ENCODE measurements at regions of chr22 and their contacts with region 1.

Region 1: DNA sequence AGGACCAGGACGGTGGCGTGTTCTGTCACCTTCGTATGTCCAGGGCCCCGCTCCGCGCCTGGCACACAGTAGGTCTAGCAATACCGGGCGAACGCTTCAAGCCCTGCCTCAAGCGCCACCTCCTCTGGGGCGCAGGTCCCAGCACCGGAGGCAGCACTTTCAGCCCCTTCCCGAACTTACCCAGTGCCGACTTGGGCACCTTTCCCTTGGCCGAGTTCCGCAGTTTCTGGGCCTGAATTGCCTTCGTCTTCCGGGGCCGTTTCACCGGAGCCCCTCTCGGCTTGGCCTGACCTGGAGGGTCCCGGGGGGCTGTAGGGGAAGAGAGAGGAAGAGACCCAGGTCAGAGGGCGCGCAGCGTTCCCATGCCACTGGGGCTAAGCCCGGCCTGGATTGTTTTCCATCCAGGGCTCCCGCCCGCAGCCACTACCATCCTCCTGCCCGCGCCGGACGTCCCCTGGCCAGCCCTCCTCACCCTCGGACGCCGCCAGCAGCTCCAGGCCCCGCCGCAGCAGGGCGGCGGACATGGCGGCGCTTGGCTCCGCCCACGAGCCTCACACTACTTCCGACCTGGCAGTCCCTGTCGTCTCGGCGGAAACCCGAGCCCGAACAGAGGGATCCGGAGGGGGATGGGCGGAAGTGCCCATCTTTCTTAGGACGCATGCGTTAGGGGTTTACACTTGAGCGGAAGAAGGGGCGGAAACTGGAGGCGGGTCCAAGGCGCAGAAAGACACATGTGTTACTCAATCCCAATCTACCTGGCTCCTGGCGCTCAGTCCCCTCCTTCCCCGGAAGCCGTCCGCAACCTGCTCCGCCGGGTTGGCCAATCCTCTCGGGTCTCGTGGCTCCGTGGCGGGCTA is at the start of gene RPS19BP1:
- DNase-seq: peak; percentile 99
- H3K4me3 Mint-ChIP-seq: peak within 1 kb of the TSS; percentile 96
- H3K27ac Mint-ChIP-seq: peak within 1 kb of the TSS; percentile 93
- H3K4me1 Mint-ChIP-seq: peaks cover 52% of the 10 kb centered on the region
- H3K27me3 Mint-ChIP-seq: no peaks in the 10 kb centered on the region
- total RNA-seq, gene RPS19BP1: 98.7 and 101 TPM in 2 replicates

Region 2: DNA sequence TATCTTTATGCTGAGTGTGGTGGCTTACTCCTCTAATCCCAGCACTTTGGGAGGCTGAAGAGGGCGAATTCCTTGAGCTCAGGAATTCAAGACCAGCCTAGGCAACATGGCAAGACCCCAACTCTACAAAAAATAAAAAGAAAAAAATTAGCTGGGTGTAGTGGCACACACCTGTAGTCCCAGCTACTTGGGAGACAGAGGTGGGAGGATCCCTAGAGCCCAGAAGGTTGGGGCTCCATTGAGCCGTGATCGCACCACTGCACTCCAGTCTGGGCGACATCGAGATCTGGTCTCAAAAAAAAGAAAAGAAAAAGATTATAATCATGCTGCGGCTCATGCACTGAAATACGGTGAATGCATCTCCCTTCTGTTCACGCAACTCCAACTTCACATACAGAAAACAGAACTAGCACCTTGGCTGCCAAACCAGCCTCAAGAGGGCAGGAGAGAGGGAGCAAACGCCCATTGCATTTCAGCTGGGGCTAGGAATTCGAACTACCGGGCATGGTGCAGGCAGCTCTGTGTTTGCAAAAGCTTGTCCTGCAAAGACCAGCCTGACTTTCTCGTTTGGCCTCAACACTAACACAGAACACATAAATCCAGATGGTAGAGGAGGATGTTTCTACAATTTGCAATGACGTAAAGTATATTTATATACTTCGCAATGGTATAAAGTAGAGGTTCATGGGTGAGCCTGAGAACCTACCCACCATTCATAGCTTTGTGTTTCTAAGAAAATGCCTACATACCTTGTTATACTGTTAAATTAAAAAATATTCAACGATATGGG is 189.0 kb before region 1 on chr22:
- intact Hi-C with region 1: loop called (anchors 1 kb)
- DNase-seq: peak; percentile 42
- H3K4me3 Mint-ChIP-seq: no peak overlapping the region
- H3K27ac Mint-ChIP-seq: no peak overlapping the region
- H3K4me1 Mint-ChIP-seq: no peaks in the 10 kb centered on the region
- H3K27me3 Mint-ChIP-seq: peaks cover 27% of the 10 kb centered on the region

Region 3: DNA sequence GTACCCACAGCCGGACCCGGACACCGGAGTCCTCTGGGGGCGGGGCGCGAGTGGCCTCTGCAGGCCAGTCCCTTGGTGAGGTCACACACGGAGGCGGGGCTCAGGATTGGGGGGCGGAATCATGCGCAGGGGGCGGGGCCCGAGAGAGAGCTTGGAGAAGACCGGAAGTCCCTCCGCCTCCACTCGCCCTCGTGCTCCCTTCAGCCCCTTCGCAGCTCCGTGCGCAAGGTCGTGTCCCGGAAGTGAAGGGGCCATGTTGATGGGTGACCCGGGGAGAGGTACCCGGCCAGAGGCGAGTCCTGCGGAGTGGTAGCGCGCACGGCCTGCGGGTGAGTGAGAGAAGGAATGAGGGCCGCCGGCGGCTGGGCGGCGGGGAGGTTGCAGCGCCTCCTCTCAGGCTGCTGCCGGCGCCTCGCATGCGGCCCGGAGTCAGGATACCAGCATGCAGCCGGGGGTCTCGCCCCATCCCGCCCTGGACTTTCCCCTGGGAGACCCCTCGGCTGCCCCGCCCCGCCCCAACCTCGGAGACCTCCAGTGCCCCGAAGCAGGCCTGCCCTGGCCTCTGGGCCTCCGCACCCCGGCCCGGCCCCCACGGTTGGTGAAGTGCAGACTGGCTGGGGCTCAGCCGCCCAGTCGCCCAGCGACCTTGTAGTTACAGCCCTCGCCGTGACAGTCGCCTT is 30.2 kb before region 1 on chr22 and contains the start of gene MIEF1:
- intact Hi-C with region 1: loop called (anchors 1 kb)
- DNase-seq: peak; percentile 89
- H3K4me3 Mint-ChIP-seq: peak within 1 kb of the TSS; percentile 99
- H3K27ac Mint-ChIP-seq: peak within 1 kb of the TSS; percentile 96
- H3K4me1 Mint-ChIP-seq: peaks cover 34% of the 10 kb centered on the region
- H3K27me3 Mint-ChIP-seq: peaks cover 5% of the 10 kb centered on the region
- total RNA-seq, gene MIEF1: 59.4 and 60.2 TPM in 2 replicates

Region 4: GRCh38 chr22:39932918-39933649 is 400.6 kb after region 1 on chr22:
- intact Hi-C with region 1: loop called (anchors 2 kb)
- DNase-seq: no peak
- H3K4me3 Mint-ChIP-seq: peak overlapping the region; percentile 80
- H3K27ac Mint-ChIP-seq: peak overlapping the region; percentile 91
- H3K4me1 Mint-ChIP-seq: peaks cover 55% of the 10 kb centered on the region
- H3K27me3 Mint-ChIP-seq: no peaks in the 10 kb centered on the region

Region 5: GRCh38 chr22:40044102-40044869 is 511.8 kb after region 1 on chr22:
- intact Hi-C with region 1: loop called (anchors 1 kb)
- DNase-seq: peak; percentile 98
- H3K4me3 Mint-ChIP-seq: peak overlapping the region; percentile 90
- H3K27ac Mint-ChIP-seq: peak overlapping the region; percentile 100
- H3K4me1 Mint-ChIP-seq: peaks cover 17% of the 10 kb centered on the region
- H3K27me3 Mint-ChIP-seq: peaks cover 3% of the 10 kb centered on the region